CD8-positive, alpha-beta memory T cell (primary cell): ENCODE measurements at regions of chr19 and their contacts with region 1.

Region 1: DNA sequence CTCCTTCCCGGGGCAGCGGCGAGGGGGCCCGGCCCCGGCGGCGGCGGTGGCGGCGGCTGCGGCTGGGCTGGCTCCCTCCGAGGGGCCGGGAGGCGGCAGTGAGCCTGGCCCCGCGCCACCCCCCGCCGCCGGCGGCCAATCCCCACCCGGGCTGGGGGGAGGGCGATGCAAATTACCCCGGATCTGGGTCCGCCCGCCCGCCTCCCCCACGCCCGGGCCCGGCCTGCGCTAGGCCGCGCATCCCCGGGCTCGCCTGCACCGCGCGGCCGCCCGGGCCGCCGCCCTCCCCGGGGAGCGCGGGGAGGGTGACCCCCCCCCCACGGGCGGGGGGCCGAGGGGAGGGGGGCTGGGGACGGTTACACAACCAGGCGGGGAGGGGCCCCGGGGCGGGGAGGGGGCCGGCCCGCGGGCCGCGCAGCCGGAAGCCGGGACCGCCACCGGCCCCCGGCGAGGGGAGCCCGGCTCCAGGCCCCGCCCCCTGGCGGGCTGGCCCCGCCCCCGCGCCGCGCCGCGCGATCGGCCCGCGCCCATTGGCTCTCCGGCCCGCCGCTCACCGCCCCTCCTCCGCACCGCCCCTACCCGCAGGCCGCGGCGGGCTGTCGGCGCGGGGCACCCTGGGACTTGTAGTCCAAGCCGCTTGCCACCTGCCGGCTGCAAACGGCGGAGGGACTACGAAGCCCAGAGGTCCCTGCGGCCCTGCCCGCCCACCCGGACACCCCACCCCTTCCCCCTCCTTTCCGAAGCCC is 1.1 kb downstream of the ZBTB7A start:
- DNase-seq: peak; percentile 95 to 98 (median 98)
- H3K4me3 ChIP-seq: no peak overlapping the region
- H3K4me3 Mint-ChIP-seq: peak overlapping the region; percentile 67 to 89 (median 80)
- H3K27ac ChIP-seq: no peak overlapping the region
- H3K27ac Mint-ChIP-seq: peak overlapping the region in 7 of 8 donors; percentile 17 to 74 (median 51)
- H3K4me1 ChIP-seq: peaks cover 56% of the 10 kb centered on the region
- H3K4me1 Mint-ChIP-seq: peaks cover 34 to 54% (median 38%) of the 10 kb centered on the region in 3 donors
- H3K27me3 ChIP-seq: no peaks in the 10 kb centered on the region
- H3K27me3 Mint-ChIP-seq: peaks cover 0 to 3% of the 10 kb centered on the region in 2 donors

Region 2: DNA sequence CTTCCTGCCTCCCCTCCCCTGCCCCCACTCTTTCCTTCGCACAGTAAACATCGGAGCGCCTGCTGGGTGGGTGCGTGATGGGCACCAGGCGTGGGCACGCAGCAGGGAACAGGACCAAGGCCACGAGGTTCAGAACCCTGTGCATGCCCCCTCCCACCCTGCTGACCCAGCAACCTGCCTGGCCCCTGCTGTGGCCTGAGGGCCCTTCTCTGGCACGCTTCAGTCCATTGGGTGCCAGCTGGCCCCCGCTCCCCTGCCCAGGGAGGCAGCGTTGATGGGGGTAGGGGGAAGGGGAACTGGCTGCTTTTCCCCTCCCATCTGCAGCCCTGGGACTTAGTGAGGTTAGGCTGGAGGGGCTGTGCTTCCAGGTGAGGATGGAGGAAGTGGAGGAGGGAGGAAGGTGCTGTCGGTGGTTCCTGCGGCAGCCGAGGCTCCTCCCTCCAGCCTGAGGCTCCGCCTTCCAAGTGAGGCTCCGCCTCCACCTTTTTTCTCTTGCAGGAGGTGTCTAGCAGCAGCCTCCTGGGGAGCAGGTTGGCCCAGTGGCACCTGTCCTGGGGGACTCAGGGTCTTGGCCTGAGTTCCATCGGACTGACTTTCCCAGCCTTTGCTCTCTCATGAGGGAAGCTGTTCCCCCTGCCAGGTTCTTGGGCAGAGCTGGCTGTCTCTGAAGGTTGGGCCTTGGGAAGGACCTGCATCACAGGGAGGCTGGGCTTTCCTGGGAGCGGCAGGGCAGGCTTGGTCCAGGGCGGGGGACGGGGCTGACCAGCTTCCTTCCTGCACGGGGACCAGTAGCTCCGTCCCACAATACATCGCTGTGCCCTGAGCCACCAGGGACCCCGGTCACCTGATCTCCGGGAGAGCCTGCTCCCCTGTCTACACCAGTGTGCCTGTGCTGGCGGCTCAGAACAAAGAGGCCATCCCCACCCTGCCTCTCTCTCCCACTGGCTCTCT is 50.8 kb before region 1 on chr19:
- CTCF ChIA-PET with region 1: no interaction called
- POLR2A ChIA-PET with region 1: no interaction called
- DNase-seq: peak in 3 of 5 donors; percentile 21 to 41 (median 31)
- H3K4me3 ChIP-seq: no peak overlapping the region
- H3K4me3 Mint-ChIP-seq: no peak overlapping the region
- H3K27ac ChIP-seq: no peak overlapping the region
- H3K27ac Mint-ChIP-seq: peak overlapping the region in 1 of 8 donors; percentile 91
- H3K4me1 ChIP-seq: peaks cover 8% of the 10 kb centered on the region
- H3K4me1 Mint-ChIP-seq: peaks cover 5 to 49% (median 15%) of the 10 kb centered on the region in 3 donors
- H3K27me3 ChIP-seq: no peaks in the 10 kb centered on the region
- H3K27me3 Mint-ChIP-seq: no peaks in the 10 kb centered on the region

Region 3: GRCh38 chr19:4042731-4043082 is 22.9 kb before region 1 on chr19:
- CTCF ChIA-PET with region 1: no interaction called
- POLR2A ChIA-PET with region 1: no interaction called
- DNase-seq: no peak
- H3K4me3 ChIP-seq: no peak overlapping the region
- H3K4me3 Mint-ChIP-seq: no peak overlapping the region
- H3K27ac ChIP-seq: no peak overlapping the region
- H3K27ac Mint-ChIP-seq: no peak overlapping the region
- H3K4me1 ChIP-seq: no peaks in the 10 kb centered on the region
- H3K4me1 Mint-ChIP-seq: peaks cover 5 to 17% (median 8%) of the 10 kb centered on the region in 3 donors
- H3K27me3 ChIP-seq: no peaks in the 10 kb centered on the region
- H3K27me3 Mint-ChIP-seq: peaks cover 0 to 2% of the 10 kb centered on the region in 2 donors

Region 4: DNA sequence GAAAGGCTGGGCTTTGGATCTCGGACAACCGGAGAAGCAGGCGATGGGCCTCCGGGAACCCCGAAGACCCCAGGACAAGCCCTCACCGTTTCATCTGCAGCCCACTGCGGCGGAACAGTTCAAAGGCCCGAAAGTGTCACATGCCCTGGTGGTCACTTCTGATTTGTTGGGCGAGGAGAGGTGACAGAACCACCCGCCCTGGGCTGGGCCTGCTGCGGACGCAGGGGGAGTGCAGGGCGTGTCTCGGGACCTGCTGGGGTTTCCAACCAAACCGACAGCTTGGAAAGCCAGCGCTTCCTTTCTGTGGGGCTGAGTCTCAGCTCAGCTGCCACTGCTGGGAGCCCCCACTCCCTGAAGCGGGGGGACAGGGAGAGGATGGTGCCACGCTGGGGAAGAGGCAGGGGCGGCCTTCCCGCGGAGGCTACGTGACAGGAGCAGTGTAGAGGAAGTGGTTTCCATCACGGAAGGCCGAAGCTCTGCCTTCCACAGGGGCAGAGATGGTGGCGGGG is 23.9 kb after region 1 on chr19:
- CTCF ChIA-PET with region 1: interaction called, 4 read pairs
- POLR2A ChIA-PET with region 1: interaction called, 24 read pairs
- DNase-seq: peak; percentile 37 to 74 (median 52)
- H3K4me3 ChIP-seq: peak overlapping the region; percentile 49
- H3K4me3 Mint-ChIP-seq: peak overlapping the region; percentile 59 to 78 (median 72)
- H3K27ac ChIP-seq: peak overlapping the region; percentile 62
- H3K27ac Mint-ChIP-seq: peak overlapping the region; percentile 81 to 96 (median 94)
- H3K4me1 ChIP-seq: peaks cover 48% of the 10 kb centered on the region
- H3K4me1 Mint-ChIP-seq: peaks cover 35 to 52% (median 48%) of the 10 kb centered on the region in 3 donors
- H3K27me3 ChIP-seq: no peaks in the 10 kb centered on the region
- H3K27me3 Mint-ChIP-seq: no peaks in the 10 kb centered on the region